GM13976 (cell line): ENCODE measurements at regions of chr2 and their contacts with region 1.

Region 1: GRCh38 chr2:175030380-175031271 is 25.4 kb upstream of the CHN1 start:
- DNase-seq: no peak
- CTCF ChIP-seq: no peak

Region 2: DNA sequence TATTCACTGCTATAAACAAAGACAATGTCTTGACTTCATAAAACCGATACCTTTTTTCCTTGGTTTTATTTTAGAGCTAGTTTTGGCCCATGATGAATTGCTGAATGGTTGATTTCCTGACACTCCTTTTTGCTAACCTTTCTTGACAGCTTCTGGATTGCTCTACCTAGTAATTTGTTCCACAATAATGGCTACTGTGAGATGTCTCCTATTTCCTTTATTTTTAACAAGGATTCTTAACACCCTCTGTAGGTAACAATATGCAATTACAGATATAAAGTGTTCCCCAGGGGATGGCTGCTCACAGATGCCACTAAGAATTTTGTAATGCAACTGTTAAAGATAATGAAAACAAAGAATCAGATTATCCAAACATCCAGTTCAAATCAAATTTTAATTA is 251.7 kb after region 1 on chr2:
- in situ Hi-C with region 1: loop called (anchors 25 kb)
- DNase-seq: peak; percentile 52
- CTCF ChIP-seq: peak; percentile 27